AG04449 (cell line): ENCODE measurements at regions of chr11 and their contacts with region 1.

Region 1: GRCh38 chr11:75142714-75143419 is 8.0 kb upstream of the SLCO2B1 start:
- DNase-seq: peak; percentile 63
- H3K4me3 ChIP-seq: no peak overlapping the region
- CTCF ChIP-seq: no peak

Region 2: DNA sequence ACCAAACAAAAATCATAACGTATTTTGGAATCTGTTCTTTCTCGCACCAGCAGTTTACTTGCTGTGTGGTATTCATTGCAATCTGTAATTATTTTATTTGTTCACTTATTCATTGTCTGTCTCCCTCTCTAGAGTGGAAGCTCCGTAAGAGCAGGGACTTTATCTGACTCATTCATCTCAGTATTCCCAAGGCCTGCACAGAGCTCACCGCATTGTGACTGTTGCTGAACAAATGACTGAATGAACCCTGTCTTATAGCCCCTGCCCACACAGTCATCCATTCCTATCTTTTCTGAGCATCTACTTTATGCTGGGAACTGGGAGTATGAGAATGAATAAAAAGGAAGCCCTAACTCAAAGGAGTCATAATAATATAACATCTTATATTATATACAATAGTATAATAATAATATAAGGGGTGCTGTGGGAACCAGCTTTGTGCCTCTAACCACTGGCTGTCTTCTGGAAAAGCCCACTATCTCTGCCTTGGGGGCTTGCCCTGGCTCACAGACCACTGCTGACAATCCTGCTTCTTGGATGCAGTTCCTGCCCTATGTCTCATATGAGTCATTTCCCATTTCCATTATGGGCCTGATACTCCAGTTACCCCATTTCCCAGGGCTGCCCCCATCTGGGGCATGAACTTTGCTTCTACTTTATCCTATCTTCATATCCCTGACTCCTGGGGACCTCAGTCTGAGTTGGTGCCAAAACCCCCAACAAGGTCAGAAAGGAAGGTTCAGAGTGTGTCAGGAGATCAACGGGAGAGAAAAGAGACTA is 205.0 kb before region 1 on chr11:
- CTCF ChIA-PET with region 1: no interaction called
- POLR2A ChIA-PET with region 1: no interaction called
- DNase-seq: no peak
- H3K4me3 ChIP-seq: no peak overlapping the region
- CTCF ChIP-seq: no peak

Region 3: GRCh38 chr11:75031771-75032549 is 110.9 kb before region 1 on chr11:
- CTCF ChIA-PET with region 1: interaction called, 85 read pairs
- POLR2A ChIA-PET with region 1: no interaction called
- DNase-seq: no peak
- H3K4me3 ChIP-seq: no peak overlapping the region
- CTCF ChIP-seq: peak; percentile 93

Region 4: DNA sequence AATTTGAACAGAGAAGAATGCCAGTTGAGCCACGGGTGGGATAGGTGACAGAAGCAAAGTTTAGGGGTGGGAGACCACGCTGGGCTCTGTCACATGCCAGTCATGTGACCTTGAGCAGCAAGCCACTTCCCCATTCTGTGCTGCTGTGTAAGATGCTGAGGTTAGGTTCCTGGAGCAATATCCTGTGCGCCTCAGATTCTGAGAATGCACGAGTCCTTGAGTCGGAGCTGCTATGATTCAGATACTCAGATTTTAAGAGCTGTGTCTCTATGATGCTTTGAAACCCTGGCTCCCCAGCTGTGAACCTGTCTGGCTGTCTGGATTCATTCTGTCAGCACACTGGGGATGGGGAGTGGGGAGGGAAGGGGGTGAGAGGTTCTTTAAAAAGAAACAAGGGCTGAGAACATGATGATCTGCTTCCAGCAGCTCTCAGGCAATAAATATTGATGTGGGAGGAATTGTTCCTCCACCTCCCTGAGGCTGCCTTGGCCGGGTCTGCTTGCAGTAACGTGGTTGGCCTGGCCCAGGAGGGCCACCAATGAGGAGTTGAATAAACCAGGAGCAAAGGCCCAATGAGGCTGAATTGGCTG is 32.0 kb after region 1 on chr11:
- CTCF ChIA-PET with region 1: interaction called, 19 read pairs
- POLR2A ChIA-PET with region 1: no interaction called
- DNase-seq: peak; percentile 7
- H3K4me3 ChIP-seq: no peak overlapping the region
- CTCF ChIP-seq: no peak

Region 5: DNA sequence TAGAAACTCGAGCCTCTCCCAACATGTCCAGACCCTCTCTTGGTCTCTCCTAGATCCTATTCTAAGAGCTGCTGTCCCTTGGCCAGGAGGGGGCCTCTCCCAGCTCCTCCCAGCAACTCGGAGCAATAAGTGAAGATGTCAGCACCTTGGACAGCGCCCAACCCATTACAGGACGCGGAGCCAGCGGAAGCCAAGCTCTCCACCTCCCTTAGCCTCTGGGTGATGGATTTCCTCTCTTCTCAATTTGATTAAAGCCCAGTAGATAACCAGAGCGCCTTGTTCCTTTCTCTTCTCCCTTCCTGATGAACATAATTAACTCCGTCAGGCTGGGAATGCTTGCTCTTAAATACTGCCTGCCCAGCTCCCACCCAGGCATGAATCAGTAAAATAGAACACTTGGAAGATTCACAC is 71.5 kb after region 1 on chr11:
- CTCF ChIA-PET with region 1: interaction called, 438 read pairs
- POLR2A ChIA-PET with region 1: no interaction called
- DNase-seq: no peak
- H3K4me3 ChIP-seq: no peak overlapping the region
- CTCF ChIP-seq: peak; percentile 52

Region 6: DNA sequence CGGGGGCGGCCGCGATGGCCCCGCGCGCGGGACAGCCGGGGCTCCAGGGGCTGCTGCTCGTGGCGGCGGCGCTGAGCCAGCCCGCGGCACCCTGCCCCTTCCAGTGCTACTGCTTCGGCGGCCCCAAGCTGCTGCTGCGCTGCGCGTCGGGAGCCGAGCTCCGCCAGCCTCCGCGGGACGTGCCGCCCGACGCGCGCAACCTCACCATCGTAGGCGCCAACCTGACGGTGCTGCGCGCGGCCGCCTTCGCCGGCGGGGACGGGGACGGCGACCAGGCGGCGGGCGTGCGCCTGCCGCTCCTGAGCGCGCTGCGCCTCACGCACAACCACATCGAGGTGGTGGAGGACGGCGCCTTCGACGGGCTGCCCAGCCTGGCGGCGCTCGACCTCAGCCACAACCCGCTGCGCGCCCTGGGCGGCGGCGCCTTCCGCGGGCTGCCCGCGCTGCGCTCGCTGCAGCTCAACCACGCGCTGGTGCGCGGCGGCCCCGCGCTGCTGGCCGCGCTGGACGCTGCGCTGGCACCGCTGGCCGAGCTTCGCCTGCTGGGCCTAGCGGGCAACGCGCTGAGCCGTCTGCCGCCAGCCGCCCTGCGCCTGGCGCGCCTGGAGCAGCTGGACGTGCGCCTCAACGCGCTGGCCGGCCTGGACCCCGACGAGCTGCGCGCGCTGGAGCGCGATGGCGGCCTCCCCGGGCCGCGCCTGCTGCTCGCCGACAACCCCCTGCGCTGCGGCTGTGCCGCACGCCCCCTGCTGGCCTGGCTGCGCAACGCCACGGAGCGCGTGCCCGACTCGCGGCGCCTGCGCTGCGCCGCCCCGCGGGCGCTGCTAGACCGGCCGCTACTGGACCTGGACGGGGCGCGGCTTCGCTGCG is 98.4 kb after region 1 on chr11:
- CTCF ChIA-PET with region 1: interaction called, 501 read pairs
- POLR2A ChIA-PET with region 1: interaction called, 3 read pairs
- DNase-seq: no peak
- H3K4me3 ChIP-seq: peak overlapping the region; percentile 62
- CTCF ChIP-seq: peak; percentile 75